ENCODE measurements at regions of chr1 and their contacts with region 1.

Region 1: DNA sequence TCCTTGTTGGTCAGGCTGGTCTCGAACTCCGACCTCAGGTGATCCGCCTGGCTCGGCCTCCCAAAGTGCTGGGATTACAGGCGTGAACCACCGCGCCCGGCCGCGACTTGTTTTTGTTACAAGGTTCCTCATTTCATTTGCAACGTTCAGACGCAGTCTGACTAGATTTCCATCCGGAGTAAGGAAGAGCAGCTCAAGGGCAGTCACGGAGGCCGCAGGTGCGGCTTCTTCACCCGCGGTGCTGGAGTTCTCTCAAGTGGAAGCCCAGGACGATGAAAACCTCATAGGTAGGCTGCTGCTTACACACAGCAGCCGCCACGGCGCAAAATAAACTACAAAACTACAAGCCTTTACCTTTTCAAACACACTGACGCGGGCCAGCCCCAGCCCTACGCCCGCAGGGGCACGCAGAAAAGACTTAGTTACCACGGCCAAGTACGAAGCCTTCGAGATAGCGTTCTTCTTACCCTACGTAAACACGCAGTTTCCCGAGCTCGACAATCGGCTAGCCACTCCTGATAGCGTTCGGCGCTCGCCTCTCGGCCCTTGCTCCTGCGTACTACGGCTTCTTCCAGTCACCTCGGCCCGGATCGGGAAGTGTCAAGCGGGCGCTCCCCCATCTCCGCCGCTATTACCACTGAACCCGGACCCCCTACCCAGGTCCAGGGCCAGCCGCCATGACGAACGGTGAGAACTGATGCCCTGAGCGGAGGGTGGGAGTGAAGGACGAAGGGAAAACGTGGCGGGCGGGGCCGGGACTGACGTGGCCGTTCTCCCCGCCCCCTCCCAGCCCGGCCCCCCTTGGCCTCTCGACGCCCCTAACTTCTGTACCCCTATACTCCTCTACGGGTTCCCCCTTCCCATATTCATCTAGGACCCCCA is at the start of gene TMEM167B:
- DNase-seq: peak; percentile 71 to 92 (median 87)
- ATAC-seq: peak; percentile 98
- H3K4me3 ChIP-seq: peak within 1 kb of the TSS; percentile 84
- H3K4me3 Mint-ChIP-seq: peak within 1 kb of the TSS; percentile 88 to 98 (median 96)
- H3K27ac ChIP-seq: peak within 1 kb of the TSS; percentile 97
- H3K27ac Mint-ChIP-seq: peak within 1 kb of the TSS; percentile 90 to 99 (median 98)
- H3K4me1 ChIP-seq: peaks cover 14 to 18% of the 10 kb centered on the region in 2 donors
- H3K4me1 Mint-ChIP-seq: peaks cover 15 to 43% (median 36%) of the 10 kb centered on the region in 7 donors
- H3K27me3 ChIP-seq: no peaks in the 10 kb centered on the region
- H3K27me3 Mint-ChIP-seq: no peaks in the 10 kb centered on the region
- total RNA-seq, gene TMEM167B: 33.2 to 65.6 (median 41.2) TPM

Region 2: GRCh38 chr1:109075531-109076490 is 14.6 kb before region 1 on chr1 and contains the start of gene TAF13:
- CTCF ChIA-PET with region 1: no interaction called
- POLR2A ChIA-PET with region 1: interaction called, 35 read pairs
- intact Hi-C with region 1: loop called (anchors 1 kb)
- DNase-seq: peak; percentile 75 to 89 (median 84)
- ATAC-seq: peak; percentile 100
- H3K4me3 ChIP-seq: peak within 1 kb of the TSS; percentile 80
- H3K4me3 Mint-ChIP-seq: peak within 1 kb of the TSS; percentile 89 to 99 (median 98)
- H3K27ac ChIP-seq: peak within 1 kb of the TSS; percentile 92
- H3K27ac Mint-ChIP-seq: peak within 1 kb of the TSS; percentile 95 to 100 (median 99)
- H3K4me1 ChIP-seq: peaks cover 5 to 8% of the 10 kb centered on the region in 2 donors
- H3K4me1 Mint-ChIP-seq: peaks cover 13 to 28% (median 20%) of the 10 kb centered on the region in 7 donors
- H3K27me3 ChIP-seq: no peaks in the 10 kb centered on the region
- H3K27me3 Mint-ChIP-seq: no peaks in the 10 kb centered on the region
- total RNA-seq, gene TAF13: 11.0 to 23.6 (median 17.6) TPM

Region 3: DNA sequence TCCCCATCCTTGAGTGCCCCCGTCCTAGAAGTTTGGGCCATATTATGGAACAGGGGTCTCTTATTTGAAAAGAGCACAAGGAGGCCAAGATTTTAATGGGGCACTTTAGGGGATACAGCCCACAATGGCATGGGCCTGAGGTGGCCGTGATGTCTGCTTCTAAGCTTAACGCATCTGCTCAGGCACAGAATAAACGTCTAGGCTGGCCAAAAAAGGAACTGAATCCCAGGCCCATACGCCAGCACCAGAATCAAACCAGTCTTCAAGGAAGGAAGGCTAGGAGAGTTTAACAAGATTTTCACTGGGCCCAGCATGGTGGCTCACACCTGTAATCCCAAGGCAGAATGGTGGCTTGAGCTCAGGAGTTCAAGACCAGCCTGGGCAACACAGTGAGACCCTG is 114.0 kb after region 1 on chr1:
- CTCF ChIA-PET with region 1: no interaction called
- POLR2A ChIA-PET with region 1: no interaction called
- intact Hi-C with region 1: no loop called
- DNase-seq: no peak
- ATAC-seq: no peak
- H3K4me3 ChIP-seq: no peak overlapping the region
- H3K4me3 Mint-ChIP-seq: no peak overlapping the region
- H3K27ac ChIP-seq: no peak overlapping the region
- H3K27ac Mint-ChIP-seq: peak overlapping the region in 1 of 9 donors; percentile 6
- H3K4me1 ChIP-seq: peaks cover 0 to 5% of the 10 kb centered on the region in 2 donors
- H3K4me1 Mint-ChIP-seq: peaks cover 4 to 20% (median 8%) of the 10 kb centered on the region in 7 donors
- H3K27me3 ChIP-seq: no peaks in the 10 kb centered on the region
- H3K27me3 Mint-ChIP-seq: peaks cover 0 to 2% (median 0%) of the 10 kb centered on the region in 5 donors

Region 4: GRCh38 chr1:109327285-109327684 is 236.8 kb after region 1 on chr1:
- CTCF ChIA-PET with region 1: no interaction called
- POLR2A ChIA-PET with region 1: no interaction called
- intact Hi-C with region 1: no loop called
- DNase-seq: no peak
- ATAC-seq: no peak
- H3K4me3 ChIP-seq: no peak overlapping the region
- H3K4me3 Mint-ChIP-seq: no peak overlapping the region
- H3K27ac ChIP-seq: no peak overlapping the region
- H3K27ac Mint-ChIP-seq: no peak overlapping the region
- H3K4me1 ChIP-seq: no peaks in the 10 kb centered on the region
- H3K4me1 Mint-ChIP-seq: no peaks in the 10 kb centered on the region
- H3K27me3 ChIP-seq: no peaks in the 10 kb centered on the region
- H3K27me3 Mint-ChIP-seq: peaks cover 0 to 17% (median 4%) of the 10 kb centered on the region in 5 donors